HAP-1 (cell line): ENCODE measurements at regions of chr2 and their contacts with region 1.

Region 1: GRCh38 chr2:134988994-134989605 is 58.1 kb downstream of the MAP3K19 start:
- DNase-seq: peak in 1 of 2 experiments; percentile 26
- H3K4me3 ChIP-seq: no peak overlapping the region
- H3K4me1 ChIP-seq: no peaks in the 10 kb centered on the region
- H3K27me3 ChIP-seq: peaks cover 15% of the 10 kb centered on the region

Region 2: DNA sequence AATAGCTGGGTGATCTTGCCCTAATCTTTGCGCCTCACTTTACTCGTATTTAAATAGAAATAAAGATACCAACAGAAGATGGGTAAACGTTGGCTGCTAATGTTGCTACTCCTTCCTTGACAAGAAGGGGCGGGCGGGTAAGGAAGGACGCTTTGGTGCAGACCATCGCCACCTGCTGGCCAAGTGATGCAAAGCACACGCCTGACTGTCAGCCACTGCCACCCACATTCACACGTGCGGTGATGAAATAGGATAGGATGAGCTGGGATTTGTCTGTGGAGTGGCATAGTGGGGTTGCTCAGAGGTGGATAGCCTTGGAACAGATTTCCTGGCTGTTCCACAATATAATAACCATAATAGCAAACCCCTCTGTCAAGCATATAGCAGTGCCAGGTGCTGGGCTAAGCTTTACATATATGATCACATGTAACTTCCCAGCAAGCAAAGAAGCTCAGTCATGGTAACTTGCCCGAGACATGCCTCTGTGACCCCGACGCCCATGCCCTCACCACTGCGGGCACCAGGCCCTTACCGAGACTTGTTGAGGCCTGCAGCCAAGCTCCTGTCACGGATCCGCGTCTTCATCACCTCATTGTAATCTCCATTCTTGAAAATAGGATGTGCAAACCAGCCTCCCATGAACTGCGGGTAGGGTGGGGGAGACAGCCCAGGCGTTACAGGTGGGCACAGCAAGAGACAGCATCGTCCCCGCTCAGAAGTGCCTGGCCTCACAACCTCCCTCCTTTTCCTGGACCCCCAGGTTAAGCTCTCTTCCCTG is 808.6 kb after region 1 on chr2:
- in situ Hi-C with region 1: loop called (anchors 10 kb)
- DNase-seq: peak; percentile 82 to 89
- H3K4me3 ChIP-seq: no peak overlapping the region
- H3K4me1 ChIP-seq: no peaks in the 10 kb centered on the region
- H3K27me3 ChIP-seq: no peaks in the 10 kb centered on the region

Region 3: DNA sequence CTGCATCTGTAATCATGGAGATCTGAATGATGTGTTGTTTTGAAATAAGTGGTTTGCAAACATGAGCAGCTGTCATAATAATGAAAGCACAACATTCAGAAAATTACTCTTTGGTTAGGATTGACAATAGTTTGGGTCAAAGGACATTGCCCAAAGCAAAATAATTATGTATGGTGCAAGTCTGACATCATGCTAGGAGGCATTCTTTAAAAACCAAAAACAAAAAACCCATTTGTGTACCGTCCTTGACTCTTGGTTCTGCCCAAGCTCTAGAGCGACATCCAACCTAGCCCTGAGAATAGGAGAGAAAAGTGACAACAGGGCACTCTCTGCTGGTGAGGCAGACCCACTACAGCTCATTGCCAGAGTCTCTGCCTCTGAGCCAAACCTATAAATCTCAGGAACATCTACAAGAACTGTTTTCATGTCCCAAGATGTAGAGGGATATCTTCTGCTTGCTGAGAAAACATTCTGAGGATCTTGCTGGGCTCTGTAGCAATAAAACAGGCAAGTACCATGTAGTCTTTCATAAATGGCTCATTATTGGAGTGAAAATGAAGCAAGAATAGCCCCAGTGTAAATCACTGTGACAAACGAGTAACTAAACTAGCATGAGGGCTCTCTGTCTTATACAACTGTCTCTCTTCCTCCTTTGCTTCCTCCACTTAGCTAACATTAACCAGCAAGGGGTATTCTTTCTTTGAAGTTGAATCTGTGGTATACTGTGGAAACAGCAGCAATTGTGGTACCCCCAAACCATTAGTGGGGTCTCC is 1395.6 kb after region 1 on chr2:
- in situ Hi-C with region 1: loop called (anchors 25 kb)
- DNase-seq: peak; percentile 32 to 50
- H3K4me3 ChIP-seq: no peak overlapping the region
- H3K4me1 ChIP-seq: no peaks in the 10 kb centered on the region
- H3K27me3 ChIP-seq: peaks cover 2% of the 10 kb centered on the region; the same call in 1 of the 2 replicates